CD14-positive monocyte (primary cell): ENCODE measurements at regions of chr17 and their contacts with region 1.

Region 1: GRCh38 chr17:33725675-33726271 is 432.7 kb upstream of the ASIC2 start:
- DNase-seq: peak in 1 of 3 donors; percentile 27
- H3K4me3 ChIP-seq: no peak overlapping the region
- H3K4me3 Mint-ChIP-seq: no peak overlapping the region
- H3K27ac ChIP-seq: no peak overlapping the region
- H3K27ac Mint-ChIP-seq: no peak overlapping the region
- H3K4me1 ChIP-seq: no peaks in the 10 kb centered on the region
- H3K4me1 Mint-ChIP-seq: no peaks in the 10 kb centered on the region
- H3K27me3 ChIP-seq: peaks cover 0 to 2% of the 10 kb centered on the region in 2 donors
- H3K27me3 Mint-ChIP-seq: peaks cover under 1 to 10% (median 7%) of the 10 kb centered on the region in 3 donors
- CTCF ChIP-seq: peak; percentile 73

Region 2: DNA sequence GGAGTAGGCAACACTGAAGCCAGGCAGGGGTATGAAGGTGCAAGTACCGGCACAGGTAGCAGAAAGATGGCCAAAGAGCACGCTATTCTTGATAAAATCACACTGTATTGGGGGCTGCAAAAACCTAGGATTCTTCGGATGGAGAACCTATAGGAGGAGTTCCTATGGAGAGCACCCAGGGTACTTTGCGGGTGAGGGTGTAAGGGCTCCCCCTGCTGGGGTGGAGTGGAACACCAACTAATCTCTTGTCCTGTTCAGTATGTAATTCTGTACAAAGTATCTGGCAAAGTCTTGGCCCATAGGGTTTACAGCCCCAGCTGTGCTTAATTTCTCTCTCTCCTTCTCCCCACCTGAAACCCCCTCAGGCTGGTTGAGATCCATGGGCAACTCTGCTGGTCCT is 39.6 kb before region 1 on chr17:
- intact Hi-C with region 1: no loop called
- DNase-seq: peak in 2 of 3 donors; percentile 4 to 11
- H3K4me3 ChIP-seq: no peak overlapping the region
- H3K4me3 Mint-ChIP-seq: no peak overlapping the region
- H3K27ac ChIP-seq: no peak overlapping the region
- H3K27ac Mint-ChIP-seq: no peak overlapping the region
- H3K4me1 ChIP-seq: no peaks in the 10 kb centered on the region
- H3K4me1 Mint-ChIP-seq: no peaks in the 10 kb centered on the region
- H3K27me3 ChIP-seq: no peaks in the 10 kb centered on the region
- H3K27me3 Mint-ChIP-seq: peaks cover 0 to 8% (median 0%) of the 10 kb centered on the region in 3 donors
- CTCF ChIP-seq: peak; percentile 73

Region 3: DNA sequence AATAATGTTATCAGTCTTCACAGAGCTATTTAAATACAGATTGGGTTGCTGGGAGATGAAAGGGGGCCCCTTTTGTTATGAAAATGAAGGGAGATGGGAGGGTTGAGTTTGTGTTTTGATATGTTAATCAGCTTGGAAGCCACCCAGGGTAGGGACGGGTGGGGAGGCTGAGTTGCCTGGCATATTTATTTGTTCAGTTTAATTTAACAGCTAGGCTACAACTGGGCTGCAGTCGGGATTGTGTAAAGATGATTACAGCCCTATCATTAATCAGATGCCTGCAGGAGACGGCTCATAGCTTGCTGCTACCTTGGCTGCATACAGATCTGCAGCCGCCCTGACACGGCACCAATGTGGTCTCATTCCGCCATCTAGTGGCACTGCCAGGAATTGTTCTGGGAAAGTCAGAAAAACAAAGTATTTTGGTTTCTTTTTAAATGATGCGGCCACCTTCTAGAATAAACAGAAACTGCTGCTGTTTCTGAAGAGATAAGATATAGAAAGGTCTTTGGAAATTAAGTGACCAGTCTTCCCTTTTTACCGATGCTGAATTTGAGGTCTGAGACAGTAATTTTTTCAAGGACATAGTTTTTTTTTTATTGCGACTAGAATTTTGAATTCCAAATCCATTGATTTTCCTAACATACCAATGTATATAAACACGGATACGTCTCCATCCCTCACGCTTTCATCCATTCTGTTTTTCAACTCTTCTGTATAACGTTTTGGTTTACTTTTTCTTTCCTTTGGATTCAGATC is 25.3 kb after region 1 on chr17:
- intact Hi-C with region 1: loop called in 1 of 2 experiments (anchors 2 kb)
- DNase-seq: peak; percentile 16 to 39 (median 32)
- H3K4me3 ChIP-seq: no peak overlapping the region
- H3K4me3 Mint-ChIP-seq: peak overlapping the region; percentile 43 to 80
- H3K27ac ChIP-seq: no peak overlapping the region
- H3K27ac Mint-ChIP-seq: peak overlapping the region in 1 of 7 donors; percentile 11
- H3K4me1 ChIP-seq: no peaks in the 10 kb centered on the region
- H3K4me1 Mint-ChIP-seq: peaks cover 7% of the 10 kb centered on the region
- H3K27me3 ChIP-seq: peaks cover 5 to 20% of the 10 kb centered on the region in 2 donors
- H3K27me3 Mint-ChIP-seq: peaks cover 15 to 27% (median 16%) of the 10 kb centered on the region in 3 donors
- CTCF ChIP-seq: peak; percentile 93